CD4-positive, alpha-beta memory T cell (primary cell): ENCODE measurements at regions of chr7 and their contacts with region 1.

Region 1: GRCh38 chr7:134140889-134141867 is 14.0 kb downstream of the LRGUK start:
- DNase-seq: peak in 4 of 5 donors; percentile 20 to 29 (median 22)
- H3K4me3 ChIP-seq: no peak overlapping the region
- H3K4me3 Mint-ChIP-seq: peak overlapping the region in 1 of 8 donors; percentile 20
- H3K27ac ChIP-seq: no peak overlapping the region
- H3K27ac Mint-ChIP-seq: no peak overlapping the region
- H3K4me1 ChIP-seq: peaks cover 5% of the 10 kb centered on the region
- H3K4me1 Mint-ChIP-seq: peaks cover 0 to 5% (median 1%) of the 10 kb centered on the region in 4 donors
- H3K27me3 ChIP-seq: no peaks in the 10 kb centered on the region
- H3K27me3 Mint-ChIP-seq: peaks cover 0 to 1% of the 10 kb centered on the region in 2 donors

Region 2: DNA sequence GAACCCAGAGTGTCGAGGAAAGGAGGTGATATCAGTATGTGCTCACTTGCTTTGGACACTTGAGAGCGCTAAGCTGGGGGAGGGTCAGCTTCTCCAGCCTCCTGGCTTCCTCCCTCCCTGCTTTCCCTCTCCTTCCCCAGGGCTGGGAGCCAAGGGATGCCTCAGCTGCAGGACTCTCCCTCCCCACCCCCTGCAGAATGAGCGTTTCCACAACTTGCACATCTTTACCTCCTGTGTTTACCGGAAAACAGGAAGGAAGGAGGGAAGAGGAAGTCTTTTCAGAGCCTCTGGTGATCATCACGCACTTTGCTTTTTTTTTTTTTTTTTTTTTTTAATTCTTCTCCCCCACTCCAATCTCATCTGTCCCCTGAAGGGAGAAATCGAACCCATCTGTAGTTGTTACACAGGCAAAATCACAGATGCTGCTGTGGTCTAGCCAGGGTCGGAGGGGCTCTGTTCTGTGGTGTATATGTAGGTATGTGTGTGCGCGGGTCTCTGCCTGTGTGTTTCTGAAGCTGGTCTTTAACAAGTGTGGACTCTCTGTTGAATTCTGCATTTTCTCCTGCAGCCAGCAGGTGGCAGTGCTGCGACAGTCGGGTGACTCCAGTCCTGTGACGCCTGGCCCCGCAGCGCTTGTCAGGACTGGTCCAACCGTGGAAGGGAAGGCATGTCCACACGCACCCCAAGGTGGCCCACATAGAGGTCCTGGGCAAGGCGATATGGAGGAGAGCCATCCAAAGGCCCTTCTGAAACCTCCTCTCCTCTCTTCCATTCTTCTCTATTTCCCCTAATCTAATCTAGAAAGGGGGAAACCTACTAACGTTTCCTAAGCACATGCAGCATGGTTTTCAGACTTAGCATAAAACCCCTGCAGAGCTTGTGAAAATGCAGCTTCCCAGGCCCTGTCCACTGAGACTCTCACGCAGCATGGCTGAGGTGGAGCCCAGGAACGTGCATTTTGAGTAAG is 1822.5 kb before region 1 on chr7:
- CTCF ChIA-PET with region 1: no interaction called
- POLR2A ChIA-PET with region 1: no interaction called
- intact Hi-C with region 1: loop called (anchors 2 kb)
- DNase-seq: peak; percentile 70 to 74 (median 72)
- H3K4me3 ChIP-seq: no peak overlapping the region
- H3K4me3 Mint-ChIP-seq: peak overlapping the region in 6 of 8 donors; percentile 4 to 51 (median 22)
- H3K27ac ChIP-seq: no peak overlapping the region
- H3K27ac Mint-ChIP-seq: no peak overlapping the region
- H3K4me1 ChIP-seq: peaks cover 10% of the 10 kb centered on the region
- H3K4me1 Mint-ChIP-seq: peaks cover 6 to 13% (median 9%) of the 10 kb centered on the region in 4 donors
- H3K27me3 ChIP-seq: no peaks in the 10 kb centered on the region
- H3K27me3 Mint-ChIP-seq: peaks cover 25 to 30% of the 10 kb centered on the region in 2 donors

Region 3: GRCh38 chr7:134058980-134059379 is 82.2 kb before region 1 on chr7:
- CTCF ChIA-PET with region 1: no interaction called
- POLR2A ChIA-PET with region 1: no interaction called
- intact Hi-C with region 1: no loop called
- DNase-seq: no peak
- H3K4me3 ChIP-seq: no peak overlapping the region
- H3K4me3 Mint-ChIP-seq: no peak overlapping the region
- H3K27ac ChIP-seq: no peak overlapping the region
- H3K27ac Mint-ChIP-seq: no peak overlapping the region
- H3K4me1 ChIP-seq: no peaks in the 10 kb centered on the region
- H3K4me1 Mint-ChIP-seq: no peaks in the 10 kb centered on the region
- H3K27me3 ChIP-seq: no peaks in the 10 kb centered on the region
- H3K27me3 Mint-ChIP-seq: no peaks in the 10 kb centered on the region

Region 4: GRCh38 chr7:134126966-134127848 is 14.0 kb before region 1 on chr7 and contains the start of gene LRGUK:
- CTCF ChIA-PET with region 1: interaction called, 22 read pairs
- POLR2A ChIA-PET with region 1: no interaction called
- intact Hi-C with region 1: no loop called
- DNase-seq: peak; percentile 74 to 81 (median 78)
- H3K4me3 ChIP-seq: peak within 1 kb of the TSS; percentile 50 to 78
- H3K4me3 Mint-ChIP-seq: peak within 1 kb of the TSS; percentile 83 to 95 (median 89)
- H3K27ac ChIP-seq: no peak within 1 kb of the TSS
- H3K27ac Mint-ChIP-seq: peak within 1 kb of the TSS in 6 of 7 donors; percentile 23 to 69 (median 44)
- H3K4me1 ChIP-seq: peaks cover 15% of the 10 kb centered on the region
- H3K4me1 Mint-ChIP-seq: peaks cover 13 to 21% (median 15%) of the 10 kb centered on the region in 4 donors
- H3K27me3 ChIP-seq: peaks cover 3% of the 10 kb centered on the region
- H3K27me3 Mint-ChIP-seq: peaks cover 12 to 20% of the 10 kb centered on the region in 2 donors
- total RNA-seq, gene LRGUK: 0.38 to 0.55 TPM

Region 5: DNA sequence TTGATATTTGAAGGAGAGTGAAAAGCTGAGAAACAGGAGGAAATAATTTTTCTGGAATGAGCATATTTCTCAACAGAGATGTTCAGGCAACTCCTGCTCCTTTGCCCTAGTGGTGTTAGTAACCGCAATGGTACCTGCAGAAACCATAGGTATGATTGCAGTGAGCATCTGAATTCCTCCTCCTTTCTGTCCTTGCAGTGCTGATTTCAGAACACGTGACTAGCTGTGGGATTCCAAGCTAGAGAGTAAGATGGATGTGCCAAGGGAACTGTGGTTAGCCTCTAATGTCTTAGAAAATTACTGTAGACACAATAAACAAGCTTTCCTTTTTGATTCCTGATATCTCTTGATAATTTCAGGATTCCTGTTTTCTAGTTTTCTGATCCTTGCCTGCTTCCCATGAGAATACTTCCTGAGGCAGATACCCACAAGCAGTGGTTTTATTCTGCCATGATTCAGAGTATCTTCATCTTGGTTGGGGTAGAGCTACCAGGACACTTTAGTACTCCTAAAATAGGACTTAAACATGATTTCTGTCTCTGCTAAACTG is 13.5 kb after region 1 on chr7:
- CTCF ChIA-PET with region 1: interaction called, 11 read pairs
- POLR2A ChIA-PET with region 1: no interaction called
- intact Hi-C with region 1: no loop called
- DNase-seq: no peak
- H3K4me3 ChIP-seq: no peak overlapping the region
- H3K4me3 Mint-ChIP-seq: no peak overlapping the region
- H3K27ac ChIP-seq: no peak overlapping the region
- H3K27ac Mint-ChIP-seq: no peak overlapping the region
- H3K4me1 ChIP-seq: no peaks in the 10 kb centered on the region
- H3K4me1 Mint-ChIP-seq: no peaks in the 10 kb centered on the region
- H3K27me3 ChIP-seq: no peaks in the 10 kb centered on the region
- H3K27me3 Mint-ChIP-seq: peaks cover 2% of the 10 kb centered on the region in 2 donors

Region 6: DNA sequence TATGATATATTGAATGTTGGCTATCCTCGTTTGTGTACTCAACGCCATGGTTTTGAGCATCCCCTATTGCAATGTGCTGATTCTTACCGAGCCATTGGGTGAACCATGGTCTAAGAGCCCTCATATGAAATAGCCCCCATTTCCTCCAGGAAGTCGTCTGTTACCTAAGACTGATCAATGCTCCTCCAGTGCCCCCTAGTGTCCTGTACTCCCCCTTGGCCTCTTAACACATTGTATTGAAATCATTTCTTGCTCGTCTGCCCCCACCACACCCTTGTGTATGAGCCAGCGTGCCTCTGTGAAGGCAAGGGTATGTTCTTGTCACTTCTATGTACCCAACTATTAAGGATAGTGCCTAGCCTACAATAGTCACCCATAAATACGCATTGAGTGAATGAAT is 186.7 kb after region 1 on chr7:
- CTCF ChIA-PET with region 1: no interaction called
- POLR2A ChIA-PET with region 1: no interaction called
- intact Hi-C with region 1: loop called (anchors 1 kb)
- DNase-seq: peak; percentile 26 to 61 (median 37)
- H3K4me3 ChIP-seq: no peak overlapping the region
- H3K4me3 Mint-ChIP-seq: no peak overlapping the region
- H3K27ac ChIP-seq: no peak overlapping the region
- H3K27ac Mint-ChIP-seq: no peak overlapping the region
- H3K4me1 ChIP-seq: no peaks in the 10 kb centered on the region
- H3K4me1 Mint-ChIP-seq: peaks cover 0 to 4% (median under 1%) of the 10 kb centered on the region in 4 donors
- H3K27me3 ChIP-seq: peaks cover 11% of the 10 kb centered on the region
- H3K27me3 Mint-ChIP-seq: peaks cover 20 to 21% of the 10 kb centered on the region in 2 donors